Activated CD8-positive, alpha-beta T cell treated with anti-CD3 and anti-CD28 coated beads for 36 hours (primary cell): ENCODE measurements at regions of chr3 and their contacts with region 1.

Region 1: DNA sequence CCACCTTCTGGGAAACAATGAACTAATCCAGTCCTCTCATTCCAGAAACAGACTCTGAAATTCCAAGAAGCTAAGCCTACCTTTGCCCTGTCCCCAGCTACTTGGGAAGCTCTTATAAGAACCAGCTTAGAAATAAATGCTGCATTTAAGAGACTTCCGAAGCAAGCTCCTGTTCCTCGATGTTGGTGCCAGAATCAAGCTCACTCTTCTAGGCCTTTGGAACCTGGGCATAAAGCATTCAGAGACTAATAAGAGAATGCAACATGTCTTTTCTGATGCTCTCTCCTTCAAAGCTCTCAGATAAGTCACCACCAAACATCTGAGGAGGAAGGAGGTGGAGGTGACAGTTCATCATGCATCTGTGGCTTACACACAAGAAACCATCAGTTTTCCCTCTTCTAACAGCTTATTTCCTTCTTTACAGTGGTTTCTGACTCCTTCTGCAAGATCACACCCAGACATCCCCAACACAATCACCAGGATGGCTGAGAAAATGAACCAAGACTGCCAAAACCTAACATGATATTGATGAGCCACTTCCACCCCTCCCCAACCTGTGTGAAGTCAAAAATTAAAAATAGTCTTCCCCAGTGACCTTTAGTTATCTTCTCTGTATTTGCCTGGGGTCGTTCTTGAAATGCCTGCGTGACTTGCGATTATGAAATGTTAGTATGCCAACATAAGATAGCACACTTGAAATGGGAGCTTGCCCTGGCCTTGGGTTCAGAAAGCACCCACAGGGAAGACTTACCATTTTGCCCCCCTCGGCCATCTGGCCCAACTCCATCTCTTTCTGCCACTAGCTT is 11.5 kb downstream of the ARHGEF3 start:
- DNase-seq: peak; percentile 55
- ATAC-seq: peak; percentile 57
- H3K4me3 Mint-ChIP-seq: peak overlapping the region; percentile 43
- H3K27ac Mint-ChIP-seq: peak overlapping the region; percentile 92
- H3K4me1 Mint-ChIP-seq: peaks cover 86% of the 10 kb centered on the region
- H3K27me3 Mint-ChIP-seq: no peaks in the 10 kb centered on the region
- CTCF ChIP-seq: no peak

Region 2: DNA sequence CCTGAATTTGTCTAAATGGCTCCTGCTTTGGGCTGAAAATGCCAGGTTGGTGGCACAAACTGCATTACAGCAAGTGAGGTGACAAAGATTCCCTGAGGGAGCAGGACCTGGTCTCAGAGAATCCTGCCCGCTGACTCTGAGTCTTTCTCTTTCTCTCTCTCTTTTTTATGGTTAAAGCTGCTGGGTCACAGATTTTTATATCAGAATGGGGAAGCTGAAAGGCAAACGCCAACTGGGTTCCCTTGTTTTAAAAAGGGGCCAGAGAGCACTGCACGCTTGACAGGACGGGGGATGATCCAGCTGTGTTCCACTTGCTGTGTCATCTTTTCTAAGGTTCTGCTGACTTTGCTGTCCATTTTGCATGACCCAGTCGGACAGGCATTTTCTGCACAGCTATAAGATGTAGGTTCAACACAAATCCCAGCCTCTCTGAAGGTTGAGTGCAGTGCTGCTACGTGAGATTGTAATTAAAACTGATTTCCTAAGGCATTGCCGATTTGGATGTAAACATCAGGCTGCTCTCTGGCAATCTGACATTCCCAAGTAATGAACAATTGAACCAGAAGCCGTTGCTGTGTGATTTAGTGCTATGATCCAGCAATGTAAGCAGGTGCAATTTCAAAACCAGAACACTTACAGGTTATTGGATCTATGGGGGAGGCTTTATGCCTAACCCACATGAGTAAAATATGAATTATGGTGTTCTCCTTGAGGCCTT is 14.2 kb before region 1 on chr3:
- CTCF ChIA-PET with region 1: interaction called, 11 read pairs
- POLR2A ChIA-PET with region 1: interaction called, 7 read pairs
- intact Hi-C with region 1: no loop called
- DNase-seq: no peak
- ATAC-seq: no peak
- H3K4me3 Mint-ChIP-seq: peak overlapping the region; percentile 22
- H3K27ac Mint-ChIP-seq: peak overlapping the region; percentile 79
- H3K4me1 Mint-ChIP-seq: peaks cover 87% of the 10 kb centered on the region
- H3K27me3 Mint-ChIP-seq: no peaks in the 10 kb centered on the region
- CTCF ChIP-seq: no peak